ENCODE measurements at regions of chr14 and their contacts with region 1.

Region 1: DNA sequence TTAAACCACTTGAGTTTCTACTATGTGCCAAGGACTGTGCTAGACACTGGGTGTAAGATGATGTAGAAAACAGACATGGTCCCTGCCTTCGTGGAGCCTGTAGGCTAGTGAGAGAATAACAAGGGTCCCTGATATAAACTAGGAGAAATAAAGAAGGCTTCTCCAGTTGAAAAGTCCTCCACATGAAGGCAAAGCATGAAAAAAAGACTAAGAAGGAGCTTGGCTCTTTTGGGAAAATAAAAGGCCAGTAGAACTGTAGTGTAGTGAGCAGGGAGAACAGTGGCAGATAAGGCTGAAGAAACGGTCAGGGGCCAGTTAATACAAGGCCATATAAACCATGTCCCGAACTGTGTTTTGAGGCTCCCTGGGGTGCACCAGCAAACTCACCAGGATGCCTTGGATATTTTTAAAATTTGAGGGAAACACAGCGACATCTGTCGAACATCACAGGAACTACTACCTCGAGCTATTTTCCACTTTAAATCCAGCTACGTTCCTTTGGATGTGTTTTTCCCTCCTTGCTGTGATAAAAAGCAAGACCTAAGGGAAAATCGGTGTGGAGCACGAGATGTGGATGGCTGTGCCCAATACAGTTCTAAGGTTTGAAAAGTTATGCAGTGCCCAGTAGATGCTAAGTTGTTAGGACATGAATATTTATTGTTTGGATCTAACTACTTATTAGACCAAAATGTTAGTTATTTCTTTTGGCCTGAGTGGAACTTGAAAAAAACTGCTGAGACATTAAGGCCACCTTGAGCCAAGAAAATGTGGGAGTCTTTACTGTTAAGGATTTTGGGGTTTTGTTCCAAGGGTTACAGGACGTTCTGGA is 8.5 kb upstream of the CFL2 start:
- DNase-seq: peak; percentile 71
- CTCF ChIP-seq: peak; percentile 67

Region 2: DNA sequence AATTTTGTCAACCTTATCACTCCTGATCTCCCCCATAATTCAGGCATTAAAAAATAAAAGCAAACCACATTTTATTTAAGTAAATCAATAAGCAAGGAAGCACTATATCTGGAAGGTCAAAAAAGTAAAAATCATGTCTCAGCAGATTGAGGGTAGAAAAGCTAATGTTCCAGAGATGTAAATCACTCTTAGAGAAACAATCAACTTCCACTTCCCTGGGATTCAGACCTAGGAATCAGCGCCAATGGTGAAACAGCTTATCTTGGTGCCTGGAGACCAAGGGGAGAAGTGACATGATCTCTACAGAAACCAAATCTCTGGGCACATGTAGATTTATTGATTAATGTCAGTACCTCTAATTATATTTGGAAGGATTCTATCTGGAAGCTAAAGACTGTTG is 82.1 kb before region 1 on chr14:
- CTCF ChIA-PET with region 1: no interaction called
- POLR2A ChIA-PET with region 1: no interaction called
- DNase-seq: no peak
- CTCF ChIP-seq: no peak

Region 3: DNA sequence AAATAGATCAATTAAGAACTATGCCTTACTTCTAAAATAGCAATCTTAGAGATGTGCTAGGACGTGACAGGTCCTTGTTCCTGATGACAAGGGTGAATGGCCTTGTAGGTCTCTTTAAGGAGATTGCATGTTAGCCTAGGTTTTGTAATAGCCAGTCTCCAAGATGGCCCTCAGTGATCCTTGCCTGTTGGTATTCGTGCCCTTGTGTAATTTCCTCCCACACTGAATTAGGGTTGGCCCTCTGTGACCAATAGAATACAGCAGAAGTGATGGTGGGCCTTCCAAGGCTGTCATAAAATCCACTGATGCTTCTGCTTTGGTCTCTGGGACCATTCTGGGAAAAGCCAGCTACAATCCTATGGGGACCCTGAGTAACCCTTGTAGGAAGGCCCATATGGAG is 54.8 kb before region 1 on chr14:
- CTCF ChIA-PET with region 1: interaction called, 143 read pairs
- POLR2A ChIA-PET with region 1: no interaction called
- DNase-seq: no peak
- CTCF ChIP-seq: no peak

Region 4: DNA sequence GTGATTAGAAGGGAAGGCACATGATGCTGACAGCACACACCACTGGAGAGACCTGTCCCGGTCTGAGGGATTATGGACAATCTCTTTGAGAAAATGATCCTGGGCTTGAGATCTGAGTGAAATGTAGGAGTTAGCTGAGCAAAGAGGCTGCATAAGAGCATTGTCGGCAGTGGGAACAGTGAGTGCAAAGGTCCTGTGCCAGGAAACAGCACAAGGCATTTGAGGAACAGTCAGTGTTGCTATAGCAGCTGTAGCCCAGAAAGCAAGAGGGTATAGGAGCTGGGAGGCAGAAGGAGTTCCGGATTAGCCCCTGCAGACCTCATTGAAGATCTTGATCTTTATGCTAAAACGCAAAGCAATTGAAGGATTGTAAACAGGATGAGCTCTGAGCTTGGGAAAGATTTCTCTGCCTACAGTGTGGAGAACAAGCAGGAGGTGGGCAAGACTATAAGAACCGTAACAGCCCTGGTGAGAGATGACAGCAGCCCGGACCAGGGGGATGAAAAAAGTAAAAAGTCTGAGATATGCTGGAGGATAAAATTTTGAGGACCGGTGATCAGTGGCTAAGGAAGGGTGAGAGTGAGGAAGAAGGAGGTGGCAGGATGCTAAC is 37.0 kb before region 1 on chr14:
- CTCF ChIA-PET with region 1: interaction called, 17 read pairs
- POLR2A ChIA-PET with region 1: no interaction called
- DNase-seq: no peak
- CTCF ChIP-seq: no peak

Region 5: GRCh38 chr14:34693228-34693939 is 29.5 kb before region 1 on chr14:
- CTCF ChIA-PET with region 1: interaction called, 17 read pairs
- POLR2A ChIA-PET with region 1: no interaction called
- DNase-seq: peak; percentile 24
- CTCF ChIP-seq: no peak

Region 6: DNA sequence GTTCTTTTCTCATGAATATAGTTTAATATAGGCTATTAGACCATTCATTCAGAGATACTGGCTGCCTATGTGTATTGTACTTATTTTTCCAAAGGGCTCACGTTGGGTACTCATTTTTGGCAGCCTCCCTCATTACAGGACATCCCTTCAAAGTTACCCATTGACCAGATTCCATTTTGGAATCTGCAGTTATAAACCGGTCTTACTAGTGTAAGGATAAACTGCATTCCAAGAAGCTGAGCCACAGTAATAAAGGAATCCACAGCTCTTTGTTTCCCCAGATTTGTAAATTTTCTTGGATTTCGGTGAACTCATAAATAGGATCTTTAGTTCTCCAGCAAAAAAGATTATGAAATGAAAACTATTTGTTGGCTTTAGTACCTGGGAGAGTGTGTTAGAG is 10.3 kb after region 1 on chr14:
- CTCF ChIA-PET with region 1: interaction called, 28 read pairs
- POLR2A ChIA-PET with region 1: no interaction called
- DNase-seq: no peak
- CTCF ChIP-seq: no peak

Region 7: DNA sequence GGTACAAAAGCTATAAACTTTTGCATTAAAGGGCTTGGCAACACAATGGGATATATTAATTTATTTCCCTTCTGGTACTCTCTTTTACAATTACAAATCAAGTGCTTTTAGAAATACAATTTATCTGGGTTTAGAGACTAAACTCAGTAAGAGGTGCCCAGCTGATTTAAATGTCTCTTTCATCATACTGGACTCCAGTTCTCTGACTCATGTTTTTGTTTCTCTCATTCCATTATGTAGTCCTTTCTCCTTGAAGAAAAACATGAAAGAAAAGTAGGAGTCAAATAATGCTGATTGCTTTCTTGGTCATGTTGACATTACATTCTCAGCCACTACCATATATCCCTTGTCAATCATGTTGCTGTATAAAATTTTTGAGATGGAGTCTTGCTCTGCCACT is 27.7 kb after region 1 on chr14:
- CTCF ChIA-PET with region 1: interaction called, 11 read pairs
- POLR2A ChIA-PET with region 1: no interaction called
- DNase-seq: no peak
- CTCF ChIP-seq: no peak